ENCODE measurements at regions of chr19 and their contacts with region 1.

Region 1: DNA sequence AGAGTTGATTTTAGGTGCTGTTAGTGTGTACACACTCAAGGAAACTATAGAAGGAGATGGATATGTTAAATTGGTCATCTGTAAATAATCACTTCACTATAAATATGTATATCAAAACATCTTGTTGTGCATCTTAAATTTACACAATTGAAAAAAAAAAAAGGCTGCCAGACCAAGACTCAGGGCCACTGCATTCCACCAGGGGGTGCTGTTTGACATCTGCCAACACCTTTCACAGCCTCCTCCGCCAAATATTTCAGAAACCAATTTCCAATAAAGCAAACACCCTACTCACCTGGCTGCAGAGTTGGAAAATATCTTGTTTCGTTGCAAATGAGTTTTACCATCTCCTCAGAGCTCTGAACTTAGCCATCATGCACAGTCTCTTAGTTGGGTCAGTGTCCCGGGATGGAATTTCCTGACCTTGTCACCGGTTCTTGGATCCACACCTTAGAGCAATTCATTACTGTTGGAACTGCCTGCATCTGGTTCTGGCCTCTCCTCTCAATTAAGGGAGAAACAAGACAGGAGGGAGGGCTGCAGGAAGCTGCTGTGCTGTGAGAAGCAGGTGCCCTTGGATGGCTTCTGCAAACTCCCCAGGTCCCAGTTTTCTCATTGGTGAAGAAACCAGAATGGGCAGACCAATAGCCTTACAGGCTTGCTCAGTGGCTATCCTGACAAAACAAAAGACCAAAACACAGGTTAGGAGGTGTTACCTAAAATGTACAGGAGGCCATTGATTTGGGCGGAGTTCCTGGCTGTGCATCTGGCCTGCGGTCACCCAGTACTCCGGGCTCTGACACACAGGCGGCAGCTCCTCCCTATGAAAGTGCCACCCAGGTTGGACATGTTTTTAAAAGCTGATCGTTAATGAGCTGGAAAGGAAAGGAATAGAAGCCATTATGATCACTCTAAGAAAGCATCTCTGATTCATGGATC is 746.6 kb downstream of the UQCRFS1 start:
- DNase-seq: peak; percentile 85
- H3K4me3 Mint-ChIP-seq: no peak overlapping the region
- H3K27ac Mint-ChIP-seq: no peak overlapping the region
- H3K4me1 Mint-ChIP-seq: peaks cover 29% of the 10 kb centered on the region
- H3K27me3 Mint-ChIP-seq: no peaks in the 10 kb centered on the region
- CTCF ChIP-seq: peak; percentile 80

Region 2: DNA sequence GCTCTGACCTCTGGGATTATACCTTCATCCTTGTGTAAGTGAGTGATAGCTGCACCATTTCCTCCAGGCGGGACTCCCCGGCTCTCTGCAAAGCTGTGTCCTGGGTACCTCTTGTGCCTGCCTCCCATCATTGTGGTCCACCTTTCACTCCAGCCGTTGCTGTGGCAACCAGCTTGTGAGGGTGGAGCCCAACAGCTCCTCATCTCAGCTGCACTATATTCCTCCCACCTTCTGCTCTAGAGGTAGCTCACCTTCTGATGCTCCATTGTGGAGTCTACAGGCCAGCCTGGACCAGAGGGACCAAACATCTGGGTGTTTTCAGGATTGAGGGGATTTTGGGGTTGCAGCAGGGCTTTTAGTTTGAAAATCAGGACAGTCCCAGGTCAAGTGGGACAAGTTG is 38.4 kb after region 1 on chr19:
- CTCF ChIA-PET with region 1: no interaction called
- intact Hi-C with region 1: no loop called
- DNase-seq: no peak
- H3K4me3 Mint-ChIP-seq: no peak overlapping the region
- H3K27ac Mint-ChIP-seq: no peak overlapping the region
- H3K4me1 Mint-ChIP-seq: no peaks in the 10 kb centered on the region
- H3K27me3 Mint-ChIP-seq: peaks cover 28% of the 10 kb centered on the region
- CTCF ChIP-seq: no peak

Region 3: GRCh38 chr19:28633319-28634018 is 167.1 kb after region 1 on chr19:
- CTCF ChIA-PET with region 1: interaction called, 11 read pairs
- intact Hi-C with region 1: loop called (anchors 1 kb)
- DNase-seq: peak; percentile 68
- H3K4me3 Mint-ChIP-seq: no peak overlapping the region
- H3K27ac Mint-ChIP-seq: no peak overlapping the region
- H3K4me1 Mint-ChIP-seq: no peaks in the 10 kb centered on the region
- H3K27me3 Mint-ChIP-seq: no peaks in the 10 kb centered on the region
- CTCF ChIP-seq: peak; percentile 94

Region 4: GRCh38 chr19:28710278-28710677 is 243.9 kb after region 1 on chr19:
- CTCF ChIA-PET with region 1: no interaction called
- intact Hi-C with region 1: loop called (anchors 1 kb)
- DNase-seq: peak; percentile 14
- H3K4me3 Mint-ChIP-seq: no peak overlapping the region
- H3K27ac Mint-ChIP-seq: no peak overlapping the region
- H3K4me1 Mint-ChIP-seq: peaks cover 13% of the 10 kb centered on the region
- H3K27me3 Mint-ChIP-seq: no peaks in the 10 kb centered on the region
- CTCF ChIP-seq: no peak

Region 5: GRCh38 chr19:28878862-28879566 is 412.6 kb after region 1 on chr19:
- CTCF ChIA-PET with region 1: interaction called, 6 read pairs
- intact Hi-C with region 1: loop called (anchors 1 kb)
- DNase-seq: peak; percentile 74
- H3K4me3 Mint-ChIP-seq: no peak overlapping the region
- H3K27ac Mint-ChIP-seq: no peak overlapping the region
- H3K4me1 Mint-ChIP-seq: peaks cover 10% of the 10 kb centered on the region
- H3K27me3 Mint-ChIP-seq: no peaks in the 10 kb centered on the region
- CTCF ChIP-seq: peak; percentile 74

Measured in Calu3 (cell line).